CD14-positive monocyte (primary cell): ENCODE measurements at regions of chr17 and their contacts with region 1.

Region 1: DNA sequence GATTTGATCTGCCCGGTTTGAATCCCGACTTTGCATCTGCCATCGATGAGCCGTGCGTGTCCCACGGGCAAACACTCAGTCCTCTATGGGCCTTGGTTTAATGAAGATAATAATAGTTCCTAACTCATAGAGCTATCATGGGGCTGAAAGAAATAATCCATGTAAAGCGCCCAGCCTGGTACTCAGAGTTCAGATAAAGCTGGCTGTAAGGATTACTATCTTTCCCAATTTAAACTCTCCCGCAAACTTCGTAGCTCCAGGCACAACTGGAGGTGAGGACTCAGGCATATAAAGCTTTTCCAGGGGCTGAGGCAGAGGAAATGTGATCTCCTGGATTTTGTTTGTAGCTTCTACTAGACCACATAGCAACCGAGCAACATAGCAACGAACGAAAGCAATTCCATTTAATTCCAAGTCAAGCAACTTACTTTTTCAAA is 16.3 kb downstream of the ALOX15 start:
- DNase-seq: no peak
- H3K4me3 ChIP-seq: no peak overlapping the region
- H3K4me3 Mint-ChIP-seq: no peak overlapping the region
- H3K27ac ChIP-seq: no peak overlapping the region
- H3K27ac Mint-ChIP-seq: no peak overlapping the region
- H3K4me1 ChIP-seq: no peaks in the 10 kb centered on the region
- H3K4me1 Mint-ChIP-seq: peaks cover 12% of the 10 kb centered on the region
- H3K27me3 ChIP-seq: peaks cover 0 to 3% of the 10 kb centered on the region in 2 donors
- H3K27me3 Mint-ChIP-seq: peaks cover 0 to 18% (median 5%) of the 10 kb centered on the region in 3 donors
- CTCF ChIP-seq: no peak

Region 2: GRCh38 chr17:3959295-3959925 is 665.8 kb before region 1 on chr17:
- intact Hi-C with region 1: no loop called
- DNase-seq: peak in 1 of 3 donors; percentile 36
- H3K4me3 ChIP-seq: no peak overlapping the region
- H3K4me3 Mint-ChIP-seq: no peak overlapping the region
- H3K27ac ChIP-seq: peak overlapping the region in 1 of 2 donors; percentile 60
- H3K27ac Mint-ChIP-seq: peak overlapping the region; percentile 77 to 95 (median 85)
- H3K4me1 ChIP-seq: peaks cover 40 to 52% of the 10 kb centered on the region in 2 donors
- H3K4me1 Mint-ChIP-seq: peaks cover 51% of the 10 kb centered on the region
- H3K27me3 ChIP-seq: no peaks in the 10 kb centered on the region
- H3K27me3 Mint-ChIP-seq: no peaks in the 10 kb centered on the region
- CTCF ChIP-seq: no peak

Region 3: DNA sequence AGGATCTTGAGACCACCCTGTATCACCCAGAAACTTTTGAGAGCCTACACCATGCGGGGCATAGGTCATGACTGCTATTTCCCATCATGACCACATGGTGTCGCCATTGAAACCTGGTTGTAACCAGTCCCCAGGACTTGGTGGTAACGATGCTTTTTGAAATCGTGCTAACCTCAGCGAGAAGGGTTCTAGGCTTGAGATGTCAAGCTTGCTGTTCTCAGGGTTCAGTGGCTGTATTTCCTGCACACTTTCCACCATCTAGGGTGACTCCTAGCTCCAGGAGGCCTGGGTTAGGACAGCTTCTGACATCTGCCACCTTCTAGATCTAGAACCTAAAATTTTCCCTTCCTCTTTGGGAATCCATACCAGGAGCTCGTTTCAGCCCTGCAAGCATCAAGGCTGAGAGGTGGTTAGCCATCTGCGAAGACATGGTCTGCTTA is 204.5 kb before region 1 on chr17:
- intact Hi-C with region 1: loop called in 1 of 2 experiments (anchors 5 kb)
- DNase-seq: peak; percentile 59 to 76 (median 71)
- H3K4me3 ChIP-seq: no peak overlapping the region
- H3K4me3 Mint-ChIP-seq: peak overlapping the region in 1 of 2 donors; percentile 46
- H3K27ac ChIP-seq: no peak overlapping the region
- H3K27ac Mint-ChIP-seq: no peak overlapping the region
- H3K4me1 ChIP-seq: peaks cover 0 to 11% of the 10 kb centered on the region in 2 donors
- H3K4me1 Mint-ChIP-seq: peaks cover 26% of the 10 kb centered on the region
- H3K27me3 ChIP-seq: no peaks in the 10 kb centered on the region
- H3K27me3 Mint-ChIP-seq: peaks cover 2 to 6% (median 5%) of the 10 kb centered on the region in 3 donors
- CTCF ChIP-seq: peak; percentile 93

Region 4: DNA sequence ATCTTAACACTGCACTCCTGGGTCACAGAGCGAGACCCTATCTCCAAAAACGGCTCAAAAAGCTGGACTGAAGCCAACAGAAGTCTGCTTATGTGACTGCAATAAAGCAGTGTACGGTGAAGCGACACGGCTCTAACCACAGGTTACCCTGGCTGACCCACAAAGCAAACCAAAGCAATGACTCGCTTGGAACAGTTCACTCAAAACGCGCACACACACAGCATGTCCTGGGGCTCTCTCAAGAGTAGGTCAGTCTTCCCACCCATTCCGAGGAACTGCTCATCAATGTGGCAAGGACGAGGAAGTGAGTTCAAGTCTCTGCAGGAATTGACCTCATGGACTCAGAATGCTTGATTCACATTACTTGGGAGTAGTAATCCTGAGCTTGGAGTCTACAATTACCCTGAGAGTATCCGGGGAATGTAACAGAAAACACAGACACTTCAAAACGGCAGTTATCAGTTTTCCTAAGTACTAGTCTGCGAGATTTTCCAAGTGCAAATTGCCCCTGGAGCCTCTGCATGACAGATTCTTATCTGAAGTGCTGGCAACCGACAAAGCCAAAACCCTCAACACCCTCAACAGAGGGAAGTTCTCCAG is 53.3 kb after region 1 on chr17:
- intact Hi-C with region 1: no loop called
- DNase-seq: no peak
- H3K4me3 ChIP-seq: no peak overlapping the region
- H3K4me3 Mint-ChIP-seq: no peak overlapping the region
- H3K27ac ChIP-seq: no peak overlapping the region
- H3K27ac Mint-ChIP-seq: no peak overlapping the region
- H3K4me1 ChIP-seq: no peaks in the 10 kb centered on the region
- H3K4me1 Mint-ChIP-seq: no peaks in the 10 kb centered on the region
- H3K27me3 ChIP-seq: no peaks in the 10 kb centered on the region
- H3K27me3 Mint-ChIP-seq: no peaks in the 10 kb centered on the region
- CTCF ChIP-seq: no peak